ENCODE measurements at regions of chr19 and their contacts with region 1.

Region 1: DNA sequence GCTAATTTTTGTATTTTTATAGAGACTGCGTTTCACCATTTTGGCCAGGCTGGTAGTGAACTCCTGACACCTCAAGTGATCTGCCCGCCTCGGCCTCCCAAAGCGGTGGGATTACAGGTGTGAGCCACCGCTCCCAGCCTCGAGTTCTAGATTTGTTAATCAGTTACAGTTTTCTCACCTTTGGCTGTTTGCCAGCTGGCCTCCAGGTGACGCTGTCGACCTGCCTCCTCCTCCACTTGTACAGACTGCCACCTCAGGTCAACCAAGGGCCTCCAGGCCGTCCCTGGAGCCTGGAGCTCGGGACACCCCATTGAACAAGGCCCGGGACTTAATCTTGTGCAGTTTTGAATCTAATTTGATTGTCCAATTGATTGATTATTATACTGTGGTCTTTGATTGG is 45.5 kb downstream of the IER2 start:
- DNase-seq: peak in 8 of 9 experiments; percentile 44 to 75 (median 56)
- ATAC-seq: no peak
- H3K4me3 ChIP-seq: no peak overlapping the region
- H3K4me3 Mint-ChIP-seq: no peak overlapping the region
- H3K27ac ChIP-seq: no peak overlapping the region
- H3K27ac Mint-ChIP-seq: no peak overlapping the region
- H3K4me1 ChIP-seq: peaks cover 32% of the 10 kb centered on the region
- H3K4me1 Mint-ChIP-seq: peaks cover 21% of the 10 kb centered on the region
- H3K27me3 ChIP-seq: no peaks in the 10 kb centered on the region
- H3K27me3 Mint-ChIP-seq: no peaks in the 10 kb centered on the region
- CTCF ChIP-seq: peak; percentile 57

Region 2: DNA sequence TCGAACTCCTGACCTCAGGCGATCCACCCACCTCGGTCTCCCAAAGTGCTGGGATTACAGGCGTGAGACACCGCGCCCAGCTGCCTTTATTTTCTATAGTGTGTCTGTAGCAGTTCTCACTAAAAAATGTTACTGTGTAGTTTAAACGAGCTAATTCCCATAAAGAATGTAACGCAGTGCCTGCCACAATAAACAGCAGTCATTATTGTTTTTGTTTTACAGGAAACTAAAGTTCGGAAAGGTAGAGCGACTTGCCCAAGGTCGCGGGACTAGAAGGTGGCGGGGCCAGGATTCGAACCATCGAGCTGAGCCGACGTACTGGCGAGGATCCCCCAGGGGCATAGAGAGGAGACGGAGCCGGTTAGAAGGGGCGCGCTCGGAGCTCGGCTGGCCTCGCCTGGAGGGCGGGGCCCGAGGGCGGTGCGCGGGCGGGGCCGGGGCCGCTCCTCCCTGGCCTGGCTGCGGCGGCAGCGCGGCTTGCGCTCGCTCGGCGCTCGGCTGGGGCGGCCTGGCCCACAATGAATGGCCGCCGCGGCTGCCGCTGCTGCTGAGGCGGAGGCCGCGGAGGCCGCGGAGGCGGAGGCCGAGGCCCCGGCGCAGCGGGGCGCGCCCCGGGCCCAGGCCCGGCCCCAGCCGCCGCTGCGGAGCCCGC is 77.8 kb before region 1 on chr19 and contains the start of gene NACC1:
- CTCF ChIA-PET with region 1: interaction called, 4 read pairs
- POLR2A ChIA-PET with region 1: interaction called, 3 read pairs
- intact Hi-C with region 1: loop called in 1 of 2 experiments (anchors 1 kb)
- DNase-seq: peak; percentile 81 to 93 (median 87)
- ATAC-seq: peak; percentile 82
- H3K4me3 ChIP-seq: peak within 1 kb of the TSS; percentile 65 to 78
- H3K4me3 Mint-ChIP-seq: peak within 1 kb of the TSS; percentile 98
- H3K27ac ChIP-seq: peak within 1 kb of the TSS; percentile 41 to 61
- H3K27ac Mint-ChIP-seq: peak within 1 kb of the TSS; percentile 96
- H3K4me1 ChIP-seq: peaks cover 35% of the 10 kb centered on the region
- H3K4me1 Mint-ChIP-seq: peaks cover 60% of the 10 kb centered on the region
- H3K27me3 ChIP-seq: no peaks in the 10 kb centered on the region
- H3K27me3 Mint-ChIP-seq: no peaks in the 10 kb centered on the region
- CTCF ChIP-seq: no peak
- total RNA-seq, gene NACC1: 16.8 to 20.8 TPM

Region 3: GRCh38 chr19:13162518-13163314 is 33.0 kb before region 1 on chr19:
- CTCF ChIA-PET with region 1: interaction called, 118 read pairs
- POLR2A ChIA-PET with region 1: interaction called, 8 read pairs
- intact Hi-C with region 1: no loop called
- DNase-seq: peak; percentile 40 to 93 (median 82)
- ATAC-seq: peak; percentile 49
- H3K4me3 ChIP-seq: peak overlapping the region; percentile 56 to 58
- H3K4me3 Mint-ChIP-seq: peak overlapping the region; percentile 85
- H3K27ac ChIP-seq: peak overlapping the region; percentile 68 to 86
- H3K27ac Mint-ChIP-seq: peak overlapping the region; percentile 96
- H3K4me1 ChIP-seq: peaks cover 72% of the 10 kb centered on the region
- H3K4me1 Mint-ChIP-seq: peaks cover 67% of the 10 kb centered on the region
- H3K27me3 ChIP-seq: no peaks in the 10 kb centered on the region
- H3K27me3 Mint-ChIP-seq: no peaks in the 10 kb centered on the region
- CTCF ChIP-seq: no peak

Region 4: GRCh38 chr19:13181747-13182388 is 13.8 kb before region 1 on chr19:
- CTCF ChIA-PET with region 1: interaction called, 38 read pairs
- POLR2A ChIA-PET with region 1: interaction called, 3 read pairs
- intact Hi-C with region 1: no loop called
- DNase-seq: peak in 7 of 9 experiments; percentile 24 to 79 (median 63)
- ATAC-seq: peak; percentile 75
- H3K4me3 ChIP-seq: no peak overlapping the region
- H3K4me3 Mint-ChIP-seq: peak overlapping the region; percentile 68
- H3K27ac ChIP-seq: peak overlapping the region in 1 of 2 experiments; percentile 67
- H3K27ac Mint-ChIP-seq: peak overlapping the region; percentile 82
- H3K4me1 ChIP-seq: peaks cover 26% of the 10 kb centered on the region
- H3K4me1 Mint-ChIP-seq: peaks cover 31% of the 10 kb centered on the region
- H3K27me3 ChIP-seq: no peaks in the 10 kb centered on the region
- H3K27me3 Mint-ChIP-seq: no peaks in the 10 kb centered on the region
- CTCF ChIP-seq: no peak

Region 5: DNA sequence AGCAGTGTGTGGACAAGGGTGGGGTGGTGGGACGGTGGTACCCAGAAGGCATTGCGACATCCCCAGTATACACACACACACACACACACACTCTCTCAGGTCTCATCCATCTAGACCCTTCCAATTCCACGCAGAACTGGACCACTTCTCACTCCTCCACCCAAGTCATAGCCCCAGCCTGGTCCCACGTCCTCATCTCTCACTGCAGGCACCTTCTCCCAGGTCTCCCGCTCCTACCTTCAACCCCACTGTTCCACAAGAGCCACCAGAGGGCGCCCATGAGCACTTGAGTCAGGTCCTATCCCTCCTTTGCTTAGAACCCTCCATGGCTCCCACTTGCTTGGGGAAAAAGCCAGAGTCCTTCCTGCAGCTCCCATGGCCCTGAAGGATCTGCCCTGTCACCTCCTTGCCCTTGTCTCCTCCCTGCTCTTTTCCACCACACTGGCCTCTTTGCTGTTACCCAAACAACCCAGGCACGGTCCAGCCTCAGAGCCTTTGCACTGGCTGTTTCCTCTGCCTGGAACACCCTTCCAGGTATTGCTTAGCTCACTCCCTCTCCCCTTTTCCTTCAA is 17.2 kb after region 1 on chr19:
- CTCF ChIA-PET with region 1: interaction called, 18 read pairs
- POLR2A ChIA-PET with region 1: no interaction called
- intact Hi-C with region 1: no loop called
- DNase-seq: peak; percentile 38 to 84 (median 77)
- ATAC-seq: peak; percentile 27
- H3K4me3 ChIP-seq: no peak overlapping the region
- H3K4me3 Mint-ChIP-seq: no peak overlapping the region
- H3K27ac ChIP-seq: no peak overlapping the region
- H3K27ac Mint-ChIP-seq: no peak overlapping the region
- H3K4me1 ChIP-seq: peaks cover 5% of the 10 kb centered on the region
- H3K4me1 Mint-ChIP-seq: peaks cover 22% of the 10 kb centered on the region
- H3K27me3 ChIP-seq: no peaks in the 10 kb centered on the region
- H3K27me3 Mint-ChIP-seq: no peaks in the 10 kb centered on the region
- CTCF ChIP-seq: peak; percentile 47

Region 6: GRCh38 chr19:13262450-13262849 is 66.8 kb after region 1 on chr19:
- CTCF ChIA-PET with region 1: interaction called, 37 read pairs
- POLR2A ChIA-PET with region 1: interaction called, 3 read pairs
- intact Hi-C with region 1: loop called in 1 of 2 experiments (anchors 1 kb)
- DNase-seq: peak in 2 of 9 experiments; percentile 61 to 72
- ATAC-seq: peak; percentile 59
- H3K4me3 ChIP-seq: no peak overlapping the region
- H3K4me3 Mint-ChIP-seq: no peak overlapping the region
- H3K27ac ChIP-seq: no peak overlapping the region
- H3K27ac Mint-ChIP-seq: no peak overlapping the region
- H3K4me1 ChIP-seq: no peaks in the 10 kb centered on the region
- H3K4me1 Mint-ChIP-seq: no peaks in the 10 kb centered on the region
- H3K27me3 ChIP-seq: no peaks in the 10 kb centered on the region
- H3K27me3 Mint-ChIP-seq: peaks cover 8% of the 10 kb centered on the region
- CTCF ChIP-seq: peak; percentile 79

Measured in CD8-positive, alpha-beta T cell (primary cell).